Posterior cingulate gyrus (tissue), 11 donors: ENCODE measurements at regions of chr16 and their contacts with region 1.

Region 1: GRCh38 chr16:58629572-58630104 is at the start of gene CNOT1:
- DNase-seq: peak; percentile 96 to 100 (median 98)

Region 2: DNA sequence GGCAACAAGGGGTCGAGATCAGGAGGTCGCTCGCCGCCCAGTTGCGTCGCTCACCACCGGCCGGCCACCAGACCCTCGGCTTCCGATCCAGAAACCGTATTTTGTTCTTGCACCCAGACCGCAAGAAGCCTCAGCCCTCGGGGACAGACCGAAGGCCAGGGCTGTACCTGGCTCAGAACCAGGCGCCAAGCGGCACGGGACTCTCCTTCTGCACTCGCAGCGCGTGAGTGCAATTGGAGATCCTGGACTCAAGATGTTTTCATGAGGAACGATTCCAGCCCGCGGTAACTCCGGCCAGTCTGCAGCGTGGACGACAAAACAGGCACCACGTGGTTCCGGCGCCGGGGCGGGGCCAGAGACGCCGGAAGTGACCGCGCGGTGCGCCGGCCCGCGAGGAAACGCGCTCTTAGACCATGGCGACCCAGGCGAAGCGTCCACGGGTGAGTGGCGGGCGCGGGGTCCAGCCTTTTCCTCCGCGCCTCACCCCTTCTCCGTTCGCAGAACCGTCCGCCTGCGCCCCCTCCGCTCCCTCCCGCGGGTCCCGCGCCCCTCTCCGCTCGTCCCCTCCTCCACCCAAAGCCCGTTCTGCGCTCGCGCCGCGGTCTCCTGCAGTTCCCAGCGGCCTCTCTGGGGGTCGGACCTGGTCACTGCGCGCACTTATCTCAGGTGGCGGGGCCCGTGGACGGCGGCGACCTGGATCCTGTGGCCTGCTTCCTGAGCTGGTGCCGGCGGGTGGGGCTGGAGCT is 114.3 kb before region 1 on chr16 and contains the start of gene SETD6:
- intact Hi-C with region 1: loop called (anchors 1 kb)
- DNase-seq: peak; percentile 87 to 98 (median 92)

Region 3: DNA sequence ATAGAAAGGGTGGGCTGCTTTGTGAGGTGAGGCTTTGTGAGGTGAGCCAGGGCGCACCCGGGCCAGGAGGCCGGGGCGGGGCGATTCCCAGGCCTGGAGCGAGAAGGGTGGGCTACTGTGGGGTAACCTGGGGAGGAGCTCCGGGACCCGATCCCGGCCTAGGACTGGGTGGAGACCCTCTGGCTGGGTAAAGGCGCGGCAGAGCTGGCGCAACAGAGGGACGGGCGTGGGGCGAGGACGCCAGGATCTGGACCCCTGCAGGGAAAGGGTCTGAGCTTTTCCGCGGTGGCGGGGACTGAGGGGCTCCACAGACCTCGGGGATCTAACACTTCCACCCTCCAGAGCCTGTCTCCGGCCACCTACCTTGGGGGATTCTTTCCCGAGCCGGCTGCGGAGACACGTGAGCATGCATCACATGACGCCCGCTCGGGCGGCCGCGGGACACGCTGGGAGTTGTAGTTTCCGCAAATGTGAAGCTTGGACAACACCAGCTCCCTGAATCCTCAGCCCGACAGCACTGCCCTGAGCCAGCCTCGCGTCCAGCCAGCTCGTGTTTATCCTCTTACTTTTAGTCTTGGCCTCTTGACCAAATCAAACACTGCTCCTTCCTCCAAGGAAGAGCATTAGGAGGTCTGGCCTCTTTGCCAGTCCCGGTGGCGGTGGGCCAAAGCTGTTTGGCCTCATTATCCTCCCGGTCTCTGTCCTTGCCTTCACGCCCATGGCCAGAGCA is 54.9 kb after region 1 on chr16 and contains the start of gene SLC38A7:
- intact Hi-C with region 1: loop called (anchors 1 kb)
- DNase-seq: peak; percentile 87 to 99 (median 91)

Region 4: GRCh38 chr16:58733671-58734458 is 104.2 kb after region 1 on chr16 and contains the start of gene GOT2:
- intact Hi-C with region 1: loop called (anchors 5 kb)
- DNase-seq: peak; percentile 67 to 98 (median 82)